Aorta (tissue), 5 donors: ENCODE measurements at regions of chr14 and their contacts with region 1.

Region 1: DNA sequence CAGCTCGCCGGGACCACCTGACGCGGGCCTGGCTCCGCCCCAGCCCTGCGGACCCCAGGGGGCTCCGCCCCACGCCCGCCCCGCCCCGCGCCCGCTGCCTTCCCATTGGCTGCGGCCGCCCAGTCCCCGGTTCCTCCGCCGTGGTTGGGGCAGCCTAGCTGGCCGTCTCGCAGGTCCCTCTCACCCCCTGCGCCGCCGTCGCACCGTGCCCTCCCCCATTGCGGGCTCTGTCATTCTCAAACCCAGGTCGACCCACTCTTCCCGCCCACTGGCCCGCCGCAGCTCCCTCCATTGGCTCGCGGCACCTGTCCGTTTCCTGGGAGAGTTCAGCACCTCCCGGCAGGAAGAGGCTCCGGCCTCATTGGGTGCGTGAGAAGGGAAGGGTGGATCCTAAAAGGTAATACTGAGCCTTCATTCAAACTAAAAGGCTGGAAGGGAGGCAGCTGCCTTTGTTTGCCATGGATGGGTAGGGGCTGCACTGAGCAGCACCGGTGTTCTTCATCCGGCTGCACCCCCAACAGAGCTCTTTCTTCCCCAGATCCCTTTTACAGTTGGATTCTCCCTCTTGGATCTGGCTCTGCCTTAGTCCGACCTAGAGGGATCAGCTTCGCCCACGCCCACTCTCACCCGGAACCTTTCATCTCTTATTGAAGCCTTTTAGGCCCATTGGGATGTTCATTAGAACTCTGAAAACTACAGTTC is 381 bp upstream of the MAP3K9 start:
- DNase-seq: peak; percentile 85 to 89
- ATAC-seq: peak; percentile 82
- H3K4me3 ChIP-seq: peak overlapping the region; percentile 50
- H3K27ac ChIP-seq: no peak overlapping the region
- H3K4me1 ChIP-seq: no peaks in the 10 kb centered on the region
- H3K27me3 ChIP-seq: no peaks in the 10 kb centered on the region

Region 2: DNA sequence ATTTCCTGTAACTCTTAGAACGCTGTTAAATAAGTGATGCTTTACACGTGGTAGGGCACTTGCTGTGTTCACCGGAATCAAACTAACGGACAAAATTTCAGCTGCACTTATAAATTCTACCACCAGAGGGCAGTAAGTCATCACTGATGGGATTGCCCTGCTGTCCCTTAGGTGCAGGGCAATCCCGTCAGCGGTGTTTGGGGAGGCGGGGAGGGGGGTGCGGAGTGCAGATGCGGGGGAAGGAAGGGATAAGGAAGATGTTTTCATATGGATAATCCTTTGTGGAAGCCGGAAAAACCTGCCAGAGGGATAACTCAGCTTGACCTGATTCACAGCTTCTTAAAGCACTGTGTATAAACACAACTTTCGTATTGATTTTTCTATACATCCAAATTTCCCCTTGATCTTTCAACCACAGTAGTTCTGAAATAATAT is 990.9 kb before region 1 on chr14:
- intact Hi-C with region 1: loop called in 1 of 2 experiments (anchors 10 kb)
- DNase-seq: no peak
- ATAC-seq: peak; percentile 68
- H3K4me3 ChIP-seq: no peak overlapping the region
- H3K27ac ChIP-seq: no peak overlapping the region
- H3K4me1 ChIP-seq: no peaks in the 10 kb centered on the region
- H3K27me3 ChIP-seq: no peaks in the 10 kb centered on the region

Region 3: DNA sequence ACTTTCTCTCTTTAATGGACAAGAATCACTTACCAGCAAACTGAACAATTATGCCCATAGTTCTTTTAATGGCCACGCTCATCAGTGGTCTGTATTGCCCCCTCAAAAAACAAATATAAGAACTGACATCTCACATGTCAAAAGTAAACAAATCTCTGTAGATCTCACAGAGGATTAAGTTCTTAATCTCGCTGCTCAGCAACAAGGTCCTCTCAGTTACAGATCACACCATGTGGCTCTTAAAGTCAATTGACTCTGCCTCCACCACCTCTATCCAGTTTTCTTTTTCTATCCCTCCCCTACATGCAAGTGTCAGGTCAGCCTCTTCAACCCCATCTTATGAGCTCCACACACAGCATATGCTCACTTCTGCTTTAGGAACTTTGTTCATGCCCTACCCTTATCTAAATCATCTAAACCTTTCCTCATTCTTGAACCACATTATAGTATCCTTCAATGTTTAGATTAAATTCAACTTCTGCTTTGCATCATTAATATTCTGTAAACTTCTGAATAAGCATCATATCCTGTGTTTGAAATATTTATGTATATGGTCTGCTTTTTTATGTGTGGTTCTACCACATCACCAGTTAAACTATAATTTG is 282.1 kb before region 1 on chr14:
- intact Hi-C with region 1: no loop called
- DNase-seq: no peak
- ATAC-seq: no peak
- H3K4me3 ChIP-seq: no peak overlapping the region
- H3K27ac ChIP-seq: no peak overlapping the region
- H3K4me1 ChIP-seq: no peaks in the 10 kb centered on the region
- H3K27me3 ChIP-seq: no peaks in the 10 kb centered on the region

Region 4: GRCh38 chr14:70622111-70622712 is 187.5 kb before region 1 on chr14:
- intact Hi-C with region 1: loop called in 1 of 2 experiments (anchors 10 kb)
- DNase-seq: no peak
- ATAC-seq: no peak
- H3K4me3 ChIP-seq: no peak overlapping the region
- H3K27ac ChIP-seq: no peak overlapping the region
- H3K4me1 ChIP-seq: no peaks in the 10 kb centered on the region
- H3K27me3 ChIP-seq: no peaks in the 10 kb centered on the region